ENCODE measurements at regions of chr16 and their contacts with region 1.

Region 1: DNA sequence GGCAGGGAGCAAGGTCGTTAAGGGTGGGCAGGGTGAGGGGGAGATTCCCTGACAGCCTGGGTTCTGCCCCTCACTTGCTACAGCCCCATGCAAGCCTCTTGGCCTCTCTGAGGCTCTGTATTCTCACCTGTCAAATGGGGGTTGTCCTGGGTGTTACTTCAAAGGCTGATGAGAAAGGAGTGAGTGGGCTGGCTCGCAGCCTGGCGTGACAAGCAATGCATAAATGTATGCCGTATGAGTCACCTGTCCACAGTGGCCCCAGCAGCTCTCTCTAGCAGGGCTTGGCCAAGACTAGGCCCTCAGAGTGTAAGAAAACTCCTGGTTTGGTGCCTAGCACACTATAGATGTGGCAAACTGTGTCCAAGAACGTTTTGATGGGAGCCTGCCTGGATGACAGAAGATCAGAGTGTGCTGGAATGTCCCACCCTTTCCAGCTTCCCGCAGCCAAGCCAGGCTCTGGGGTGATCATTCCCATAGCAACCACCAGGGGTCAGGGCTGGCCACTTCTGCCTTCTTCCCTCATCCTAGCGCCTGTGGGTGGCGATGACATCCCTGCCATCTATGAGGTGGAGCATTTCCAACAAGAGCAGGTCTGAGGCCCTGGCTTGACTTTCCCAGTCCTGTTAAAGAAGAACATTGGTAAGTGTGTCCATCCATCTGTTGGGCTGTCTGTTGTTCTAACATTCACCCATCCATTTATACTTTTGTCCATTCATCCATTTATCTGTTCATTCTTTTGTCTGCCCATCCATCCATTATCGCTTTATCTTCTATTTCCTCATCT is 37.2 kb upstream of the ADGRG1 start:
- DNase-seq: no peak
- H3K4me3 ChIP-seq: 0 out of 2 replicates have a peak overlapping the region, but pooled peaks have one; percentile 7
- H3K27ac ChIP-seq: peak overlapping the region; percentile 83
- H3K27me3 ChIP-seq: peaks cover 3% of the 10 kb centered on the region
- CTCF ChIP-seq: peak; percentile 93

Region 2: DNA sequence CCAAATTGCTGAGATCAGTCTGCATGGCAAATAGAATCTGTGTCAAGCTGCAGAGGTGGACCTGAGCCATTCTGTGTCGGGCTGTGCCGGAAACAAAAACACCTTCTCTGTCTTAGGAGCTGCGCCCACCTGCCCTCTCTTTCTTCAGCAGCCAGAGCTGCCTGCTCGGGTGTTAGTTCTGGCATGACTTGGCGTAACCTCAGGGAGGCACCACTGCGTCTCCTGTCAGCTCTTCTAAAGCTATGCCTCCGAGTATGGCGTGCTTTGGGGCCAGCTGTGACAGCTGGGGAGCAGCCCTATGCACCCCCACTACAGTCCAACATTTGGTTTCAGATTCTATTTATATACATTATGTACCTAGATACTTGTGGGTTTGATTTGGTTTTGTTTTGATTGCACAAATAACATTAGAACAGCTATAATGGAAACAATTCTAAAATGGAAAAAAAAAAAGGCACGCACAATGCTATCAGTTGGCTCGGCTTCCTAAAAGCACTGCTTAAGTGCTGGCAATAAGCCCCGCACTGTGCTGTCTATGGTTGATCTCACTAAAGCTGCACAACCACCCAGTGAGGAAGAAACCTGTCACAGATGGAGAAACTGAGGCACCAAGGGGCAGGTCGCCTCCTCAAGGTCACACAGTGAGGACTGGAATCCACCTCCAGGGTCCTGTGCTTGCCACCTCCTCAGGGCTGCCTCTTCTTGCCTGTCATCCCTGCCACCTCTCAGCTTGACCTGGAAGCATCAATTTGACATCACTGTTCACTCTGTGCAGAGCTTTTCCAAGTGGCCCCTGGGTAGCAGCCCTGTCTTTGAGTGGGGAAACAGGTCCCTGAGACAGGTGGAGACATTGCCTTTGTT is 18.5 kb after region 1 on chr16:
- CTCF ChIA-PET with region 1: interaction called, 23 read pairs
- POLR2A ChIA-PET with region 1: no interaction called
- DNase-seq: no peak
- H3K4me3 ChIP-seq: no peak overlapping the region
- H3K27ac ChIP-seq: no peak overlapping the region
- H3K27me3 ChIP-seq: no peaks in the 10 kb centered on the region
- CTCF ChIP-seq: peak; percentile 26; the same call in 1 of the 2 replicates

Region 3: GRCh38 chr16:57795431-57795878 is 204.2 kb after region 1 on chr16:
- CTCF ChIA-PET with region 1: interaction called, 13 read pairs
- POLR2A ChIA-PET with region 1: no interaction called
- DNase-seq: no peak
- H3K4me3 ChIP-seq: no peak overlapping the region
- H3K27ac ChIP-seq: no peak overlapping the region
- H3K27me3 ChIP-seq: no peaks in the 10 kb centered on the region
- CTCF ChIP-seq: peak; percentile 44

Region 4: DNA sequence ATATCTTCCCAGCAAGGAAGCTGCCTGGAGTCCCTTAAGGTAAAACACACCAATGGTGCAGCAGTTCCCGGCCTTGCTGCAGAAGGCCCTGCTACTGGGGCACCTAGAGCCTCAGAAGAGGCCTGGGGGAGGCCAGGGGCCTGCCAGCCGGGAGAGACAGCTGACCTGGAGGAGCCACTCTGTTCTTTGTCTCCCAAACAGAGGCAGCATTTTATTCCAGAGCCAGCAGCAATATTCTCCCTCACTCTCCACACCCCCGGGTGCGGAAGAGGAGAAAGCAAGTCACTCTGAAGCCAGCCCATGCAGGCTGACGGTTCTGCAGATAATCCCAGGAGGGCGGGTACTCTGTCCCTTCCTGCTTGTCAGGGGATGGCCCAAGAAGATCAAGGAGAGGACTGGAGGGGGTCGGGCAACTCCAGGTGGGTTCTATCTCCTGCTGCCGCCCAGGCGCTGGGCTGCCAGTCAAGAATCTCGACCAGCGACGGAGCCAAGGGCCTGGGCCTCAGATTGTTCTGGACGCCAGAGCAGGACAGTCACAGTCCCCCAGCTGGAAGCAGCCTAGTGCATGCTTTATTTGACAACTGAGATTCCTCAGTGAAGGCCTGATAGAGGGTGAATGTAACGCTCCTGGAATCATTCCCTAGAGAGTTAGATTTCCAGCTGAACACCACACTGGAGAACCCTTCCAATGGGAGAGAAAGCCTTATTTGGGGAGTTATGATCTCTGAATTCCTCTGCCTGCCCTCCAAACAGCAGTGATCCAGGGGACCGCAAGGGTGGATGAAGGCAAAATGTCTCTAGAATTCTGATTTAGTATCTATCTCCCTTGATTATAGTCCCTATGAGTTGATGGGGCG is 212.1 kb after region 1 on chr16:
- CTCF ChIA-PET with region 1: interaction called, 10 read pairs
- POLR2A ChIA-PET with region 1: no interaction called
- DNase-seq: no peak
- H3K4me3 ChIP-seq: no peak overlapping the region
- H3K27ac ChIP-seq: peak overlapping the region; percentile 77
- H3K27me3 ChIP-seq: no peaks in the 10 kb centered on the region
- CTCF ChIP-seq: no peak